ENCODE measurements at regions of chr15 and their contacts with region 1.

Region 1: GRCh38 chr15:58070801-58071418 is 5.4 kb upstream of the ALDH1A2 start:
- DNase-seq: peak; percentile 53 to 71
- H3K4me3 ChIP-seq: no peak overlapping the region
- H3K27ac ChIP-seq: no peak overlapping the region
- H3K4me1 ChIP-seq: peaks cover 4 to 5% of the 10 kb centered on the region in 2 donors
- H3K27me3 ChIP-seq: peaks cover 11% of the 10 kb centered on the region
- CTCF ChIP-seq: peak; percentile 68 to 89 (median 75)
- POLR2A ChIP-seq: no peak

Region 2: GRCh38 chr15:57259568-57260040 is 811.3 kb before region 1 on chr15:
- intact Hi-C with region 1: no loop called
- DNase-seq: no peak
- H3K4me3 ChIP-seq: no peak overlapping the region
- H3K27ac ChIP-seq: no peak overlapping the region
- H3K4me1 ChIP-seq: peaks cover 16 to 17% of the 10 kb centered on the region in 2 donors
- H3K27me3 ChIP-seq: no peaks in the 10 kb centered on the region
- CTCF ChIP-seq: no peak
- POLR2A ChIP-seq: no peak

Region 3: GRCh38 chr15:57732526-57733331 is 338.2 kb before region 1 on chr15:
- intact Hi-C with region 1: loop called (anchors 10 kb)
- DNase-seq: peak; percentile 53
- H3K4me3 ChIP-seq: no peak overlapping the region
- H3K27ac ChIP-seq: no peak overlapping the region
- H3K4me1 ChIP-seq: peaks cover 0 to 4% of the 10 kb centered on the region in 2 donors
- H3K27me3 ChIP-seq: no peaks in the 10 kb centered on the region
- CTCF ChIP-seq: peak; percentile 65 to 96 (median 74)
- POLR2A ChIP-seq: no peak

Region 4: DNA sequence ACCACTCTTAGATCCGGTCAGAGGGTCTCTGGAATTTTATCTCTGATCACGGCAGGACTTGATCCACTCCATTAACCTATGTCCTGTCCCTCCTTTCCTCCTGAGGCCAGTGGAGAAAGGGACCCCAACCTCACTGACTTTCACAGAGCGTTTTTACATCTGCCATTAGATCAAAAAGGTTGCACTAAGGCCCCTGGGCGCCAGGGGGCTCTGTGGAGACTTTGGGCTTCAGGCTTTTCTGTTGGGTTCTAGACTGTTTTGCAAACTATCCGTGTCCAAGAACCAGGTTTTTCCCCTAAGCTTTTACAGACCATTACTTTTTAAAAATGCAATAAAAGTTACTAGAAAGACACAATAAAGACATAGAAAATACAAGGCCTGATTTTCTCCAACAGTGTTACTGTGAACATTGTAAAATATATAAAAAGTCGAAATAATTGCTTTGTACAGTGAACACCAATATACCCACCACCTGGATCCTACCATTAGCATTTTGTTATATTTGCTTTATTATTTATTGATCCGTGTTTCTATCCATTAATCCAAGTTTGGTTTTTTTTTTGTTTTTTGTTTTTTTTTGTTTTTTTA is 204.7 kb before region 1 on chr15:
- intact Hi-C with region 1: loop called (anchors 5 kb)
- DNase-seq: peak; percentile 63 to 73
- H3K4me3 ChIP-seq: no peak overlapping the region
- H3K27ac ChIP-seq: no peak overlapping the region
- H3K4me1 ChIP-seq: no peaks in the 10 kb centered on the region
- H3K27me3 ChIP-seq: no peaks in the 10 kb centered on the region
- CTCF ChIP-seq: peak; percentile 32 to 81 (median 62)
- POLR2A ChIP-seq: no peak

Region 5: DNA sequence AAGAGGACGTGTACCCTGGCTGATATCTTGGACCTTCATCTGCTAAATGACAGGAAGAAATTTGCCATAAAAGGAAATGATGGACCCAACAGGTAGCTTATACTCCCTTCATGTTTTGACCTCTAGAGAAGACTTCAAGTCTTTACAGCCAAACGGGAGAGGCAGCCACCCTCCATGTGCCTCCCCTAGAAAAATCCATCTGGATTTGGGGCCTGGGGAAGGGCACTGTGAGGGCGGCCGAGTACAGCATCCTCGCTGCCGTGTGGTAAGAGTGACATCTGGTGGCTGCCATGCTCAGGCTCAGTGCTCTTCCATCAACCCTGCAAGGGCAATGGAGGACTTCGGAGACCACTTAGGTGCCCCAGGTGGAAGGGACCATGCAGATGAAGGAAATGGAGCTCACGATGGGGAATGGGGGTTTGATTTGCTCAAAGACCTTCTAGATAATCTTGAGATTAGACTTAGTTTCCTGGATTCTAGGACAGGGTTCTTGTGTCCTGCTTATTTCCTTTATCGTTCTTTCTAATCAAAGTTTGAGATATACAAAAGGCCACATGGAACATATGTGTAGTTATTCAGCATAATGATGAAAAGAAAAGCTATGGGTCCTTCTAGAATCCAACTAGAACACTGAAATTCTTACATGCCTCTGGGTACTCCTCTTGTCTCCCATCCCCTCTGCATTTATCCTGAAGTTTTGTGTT is 111.7 kb after region 1 on chr15:
- intact Hi-C with region 1: loop called (anchors 10 kb)
- DNase-seq: peak; percentile 43 to 48
- H3K4me3 ChIP-seq: no peak overlapping the region
- H3K27ac ChIP-seq: no peak overlapping the region
- H3K4me1 ChIP-seq: no peaks in the 10 kb centered on the region
- H3K27me3 ChIP-seq: no peaks in the 10 kb centered on the region
- CTCF ChIP-seq: peak; percentile 33 to 89 (median 78)
- POLR2A ChIP-seq: no peak